HCT116 (cell line): ENCODE measurements at regions of chr9 and their contacts with region 1.

Region 1: GRCh38 chr9:4315582-4316215 is 15.8 kb upstream of the GLIS3 start:
- DNase-seq: peak; percentile 71
- ATAC-seq: peak; percentile 100
- H3K4me3 ChIP-seq: no peak overlapping the region
- H3K27ac ChIP-seq: no peak overlapping the region
- H3K4me1 ChIP-seq: no peaks in the 10 kb centered on the region
- H3K27me3 ChIP-seq: no peaks in the 10 kb centered on the region
- CTCF ChIP-seq: peak; percentile 71 to 95 (median 79); a peak in 5 of 6 replicates
- POLR2A ChIP-seq: no peak
- RAD21 ChIP-seq: peak; percentile 91

Region 2: DNA sequence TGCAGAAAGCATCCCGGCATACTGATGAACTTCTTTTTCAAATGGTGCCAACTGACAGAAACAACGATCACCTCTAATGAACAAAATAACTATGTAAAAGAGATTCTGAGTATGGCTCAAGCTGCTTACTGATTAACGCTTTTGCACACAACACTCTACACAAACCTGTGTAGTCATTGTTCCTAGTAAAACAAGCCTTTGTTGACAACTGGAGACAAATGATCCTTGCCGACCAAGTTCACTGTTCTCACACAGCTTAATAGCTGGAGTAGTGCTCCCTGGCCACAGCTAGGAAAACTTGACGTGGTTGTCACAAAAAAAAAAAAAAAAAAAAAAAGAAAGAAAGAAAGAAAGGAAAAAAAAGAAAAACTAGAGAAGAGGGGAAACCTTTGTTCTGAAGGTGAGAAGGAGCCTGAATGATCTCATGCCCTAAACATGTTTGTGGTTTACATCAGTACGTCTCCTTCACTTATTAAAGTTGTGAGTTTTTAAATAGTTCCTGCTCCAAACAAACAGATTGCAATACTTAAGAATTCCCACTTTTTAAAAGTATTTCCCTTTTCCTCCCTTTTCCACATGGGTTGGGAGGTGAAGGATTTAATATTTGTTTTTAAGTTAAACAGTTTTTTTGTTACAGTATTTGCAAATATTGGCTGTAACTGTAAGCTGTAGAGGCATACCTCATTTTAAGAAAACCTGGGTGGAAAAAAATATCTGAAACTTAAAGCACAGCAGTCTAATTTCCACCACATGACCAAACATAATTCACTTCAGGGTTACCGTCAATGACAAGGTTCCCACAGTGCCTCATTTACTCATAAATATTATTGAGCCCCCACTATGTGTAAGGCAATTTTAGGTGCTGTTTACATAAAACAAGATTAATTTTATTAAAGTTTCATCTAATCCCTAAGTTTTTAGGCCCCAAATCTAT is 79.6 kb before region 1 on chr9:
- CTCF ChIA-PET with region 1: no interaction called
- POLR2A ChIA-PET with region 1: no interaction called
- RAD21 ChIA-PET with region 1: no interaction called
- intact Hi-C with region 1: no loop called
- DNase-seq: peak; percentile 40
- ATAC-seq: peak; percentile 59; the same call in 1 of the 2 replicates
- H3K4me3 ChIP-seq: peak overlapping the region in 1 of 2 experiments; percentile 14; a peak in 1 of 4 replicates
- H3K27ac ChIP-seq: peak overlapping the region; percentile 37; the same call in 1 of the 2 replicates
- H3K4me1 ChIP-seq: peaks cover 14 to 34% of the 10 kb centered on the region in 2 experiments
- H3K27me3 ChIP-seq: no peaks in the 10 kb centered on the region
- CTCF ChIP-seq: no peak
- POLR2A ChIP-seq: no peak
- RAD21 ChIP-seq: no peak

Region 3: GRCh38 chr9:4297151-4297785 is 18.4 kb before region 1 on chr9:
- CTCF ChIA-PET with region 1: interaction called, 18 read pairs
- POLR2A ChIA-PET with region 1: no interaction called
- RAD21 ChIA-PET with region 1: no interaction called
- intact Hi-C with region 1: no loop called
- DNase-seq: peak; percentile 79
- ATAC-seq: peak; percentile 67
- H3K4me3 ChIP-seq: peak overlapping the region; percentile 71 to 73
- H3K27ac ChIP-seq: peak overlapping the region; percentile 75
- H3K4me1 ChIP-seq: peaks cover 18 to 80% of the 10 kb centered on the region in 2 experiments
- H3K27me3 ChIP-seq: no peaks in the 10 kb centered on the region
- CTCF ChIP-seq: peak; percentile 24 to 57 (median 55); a peak in 5 of 6 replicates
- POLR2A ChIP-seq: no peak
- RAD21 ChIP-seq: peak; percentile 56

Region 4: DNA sequence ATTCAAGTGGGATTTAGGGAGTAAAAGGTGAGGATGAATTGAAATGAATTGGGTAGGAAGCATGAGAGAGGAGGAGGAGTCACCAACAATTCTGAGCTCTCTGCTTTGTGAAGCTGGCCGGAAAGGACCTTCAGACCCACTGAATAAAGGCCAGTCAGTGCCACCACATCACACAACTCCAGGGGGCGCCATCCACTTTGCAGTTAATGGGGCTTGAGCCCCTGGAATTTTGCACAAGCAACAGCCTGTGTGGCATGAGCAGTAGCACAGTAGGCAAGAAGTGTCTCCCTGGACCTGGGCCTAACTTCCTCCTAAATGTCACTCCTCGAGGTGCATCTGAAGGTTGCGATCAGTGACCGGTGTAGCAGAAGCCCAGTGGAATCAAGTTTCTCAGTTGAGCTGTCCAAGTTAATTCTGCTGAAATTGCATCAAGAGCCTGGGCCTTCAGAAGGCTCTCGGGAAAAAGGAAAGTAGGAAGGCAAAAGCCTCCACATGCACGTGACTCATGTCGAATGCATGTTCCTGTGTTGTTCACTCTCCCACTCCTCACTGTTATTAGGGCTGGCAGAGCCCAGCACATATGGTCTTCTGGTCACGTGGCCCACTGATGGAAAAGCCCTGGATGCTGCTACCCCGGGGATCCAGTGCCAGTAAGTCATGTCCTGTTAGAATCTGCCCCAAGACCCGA is 11.9 kb after region 1 on chr9:
- CTCF ChIA-PET with region 1: interaction called, 13 read pairs
- POLR2A ChIA-PET with region 1: no interaction called
- RAD21 ChIA-PET with region 1: no interaction called
- intact Hi-C with region 1: no loop called
- DNase-seq: no peak
- ATAC-seq: peak; percentile 60
- H3K4me3 ChIP-seq: no peak overlapping the region
- H3K27ac ChIP-seq: no peak overlapping the region
- H3K4me1 ChIP-seq: peaks cover 0 to 4% of the 10 kb centered on the region in 2 experiments; a peak in 1 of 4 replicates
- H3K27me3 ChIP-seq: no peaks in the 10 kb centered on the region
- CTCF ChIP-seq: peak in 2 of 3 experiments; percentile 29 to 44; a peak in 3 of 6 replicates
- POLR2A ChIP-seq: no peak
- RAD21 ChIP-seq: peak; percentile 24

Region 5: DNA sequence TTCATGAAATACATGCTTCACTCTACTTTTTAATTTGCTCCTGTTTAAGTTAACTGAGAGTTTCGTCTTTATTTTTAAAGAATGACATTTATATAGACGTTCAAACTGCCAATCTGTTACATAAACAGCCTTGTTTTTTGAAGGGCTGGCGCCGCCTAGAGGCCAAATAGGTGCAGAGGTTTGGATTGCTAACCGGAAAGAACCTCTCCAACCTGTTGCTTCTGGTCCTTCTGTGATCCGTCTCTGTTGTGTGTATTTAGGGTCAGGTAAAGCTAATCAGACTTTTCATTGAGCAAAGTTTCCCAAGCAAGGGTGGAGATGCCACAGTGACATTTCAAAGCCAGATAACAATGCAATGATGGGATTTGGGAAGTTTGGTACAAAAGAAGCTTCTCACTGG is 23.7 kb after region 1 on chr9:
- CTCF ChIA-PET with region 1: interaction called, 14 read pairs
- POLR2A ChIA-PET with region 1: no interaction called
- RAD21 ChIA-PET with region 1: interaction called in 1 of 2 experiments, 5 read pairs
- intact Hi-C with region 1: no loop called
- DNase-seq: peak; percentile 81
- ATAC-seq: peak; percentile 92
- H3K4me3 ChIP-seq: peak overlapping the region in 1 of 2 experiments; percentile 12; a peak in 1 of 4 replicates
- H3K27ac ChIP-seq: 0 out of 2 replicates have a peak overlapping the region, but pooled peaks have one; percentile 25
- H3K4me1 ChIP-seq: peaks cover 0 to 14% of the 10 kb centered on the region in 2 experiments; a peak in 3 of 4 replicates
- H3K27me3 ChIP-seq: no peaks in the 10 kb centered on the region
- CTCF ChIP-seq: peak; percentile 83 to 99 (median 96)
- POLR2A ChIP-seq: no peak
- RAD21 ChIP-seq: peak; percentile 87

Region 6: DNA sequence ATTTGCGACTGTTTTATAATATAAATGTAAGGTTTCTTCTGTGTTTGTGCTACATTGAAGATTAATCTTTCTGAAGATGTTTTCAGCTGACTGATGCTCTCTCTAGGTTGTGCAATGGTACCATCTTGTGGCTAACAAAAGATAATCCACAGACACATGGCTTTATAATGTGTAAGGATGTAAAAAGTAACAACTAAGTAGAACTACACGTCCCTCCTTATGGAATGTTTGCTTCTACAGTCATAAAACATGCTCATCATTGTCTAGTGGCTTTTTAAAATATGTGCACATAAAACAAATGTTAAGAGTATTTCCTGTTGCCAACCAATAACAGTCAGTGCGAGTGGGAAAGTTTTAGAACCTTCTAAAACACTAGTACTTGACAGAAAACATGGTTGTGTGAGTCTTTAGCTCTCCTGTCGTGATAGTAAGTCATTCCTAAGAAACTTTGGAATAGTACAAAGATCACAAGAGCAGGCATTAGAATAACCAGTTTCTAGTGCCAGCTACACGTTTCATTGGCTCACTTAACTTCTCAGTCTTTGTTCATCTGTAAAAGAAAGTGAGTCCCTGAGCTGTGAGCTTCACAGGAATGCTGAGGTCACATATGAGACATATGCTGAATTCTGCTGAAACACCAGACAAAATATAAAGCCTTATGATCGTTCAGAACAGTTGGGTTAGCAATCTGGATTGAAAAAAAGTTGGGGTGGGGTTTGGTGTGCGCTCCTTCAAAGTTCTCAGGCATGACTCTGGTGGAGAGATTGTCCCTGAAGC is 59.9 kb after region 1 on chr9:
- CTCF ChIA-PET with region 1: interaction called, 9 read pairs
- POLR2A ChIA-PET with region 1: no interaction called
- RAD21 ChIA-PET with region 1: no interaction called
- intact Hi-C with region 1: loop called (anchors 2 kb)
- DNase-seq: peak; percentile 26
- ATAC-seq: peak; percentile 70
- H3K4me3 ChIP-seq: no peak overlapping the region
- H3K27ac ChIP-seq: no peak overlapping the region
- H3K4me1 ChIP-seq: no peaks in the 10 kb centered on the region
- H3K27me3 ChIP-seq: no peaks in the 10 kb centered on the region
- CTCF ChIP-seq: peak; percentile 21 to 60 (median 55); a peak in 4 of 6 replicates
- POLR2A ChIP-seq: no peak
- RAD21 ChIP-seq: peak; percentile 83

Region 7: GRCh38 chr9:4515958-4516375 is 200.3 kb after region 1 on chr9:
- CTCF ChIA-PET with region 1: no interaction called
- POLR2A ChIA-PET with region 1: no interaction called
- RAD21 ChIA-PET with region 1: no interaction called
- intact Hi-C with region 1: no loop called
- DNase-seq: no peak
- ATAC-seq: no peak
- H3K4me3 ChIP-seq: no peak overlapping the region
- H3K27ac ChIP-seq: no peak overlapping the region
- H3K4me1 ChIP-seq: no peaks in the 10 kb centered on the region
- H3K27me3 ChIP-seq: no peaks in the 10 kb centered on the region
- CTCF ChIP-seq: no peak
- POLR2A ChIP-seq: no peak
- RAD21 ChIP-seq: no peak

Region 8: GRCh38 chr9:4640027-4640426 is 324.3 kb after region 1 on chr9:
- CTCF ChIA-PET with region 1: no interaction called
- POLR2A ChIA-PET with region 1: no interaction called
- RAD21 ChIA-PET with region 1: no interaction called
- intact Hi-C with region 1: loop called (anchors 5 kb)
- DNase-seq: peak; percentile 31
- ATAC-seq: peak; percentile 71
- H3K4me3 ChIP-seq: no peak overlapping the region
- H3K27ac ChIP-seq: no peak overlapping the region
- H3K4me1 ChIP-seq: no peaks in the 10 kb centered on the region
- H3K27me3 ChIP-seq: no peaks in the 10 kb centered on the region
- CTCF ChIP-seq: peak; percentile 59 to 74 (median 65); a peak in 5 of 6 replicates
- POLR2A ChIP-seq: no peak
- RAD21 ChIP-seq: peak; percentile 81